ENCODE measurements at regions of chr17 and their contacts with region 1.

Region 1: GRCh38 chr17:8156246-8156992 is 4.2 kb upstream of the PER1 start:
- DNase-seq: peak; percentile 99 to 100 (median 100)
- ATAC-seq: peak; percentile 70
- H3K4me3 ChIP-seq: peak overlapping the region; percentile 86
- H3K4me3 Mint-ChIP-seq: no peak overlapping the region
- H3K27ac ChIP-seq: peak overlapping the region; percentile 99 to 100
- H3K27ac Mint-ChIP-seq: no peak overlapping the region
- H3K4me1 ChIP-seq: peaks cover 88% of the 10 kb centered on the region
- H3K4me1 Mint-ChIP-seq: peaks cover 73% of the 10 kb centered on the region
- H3K27me3 ChIP-seq: no peaks in the 10 kb centered on the region
- H3K27me3 Mint-ChIP-seq: peaks cover 3% of the 10 kb centered on the region
- CTCF ChIP-seq: no peak

Region 2: GRCh38 chr17:8103549-8103948 is 52.9 kb before region 1 on chr17:
- CTCF ChIA-PET with region 1: no interaction called
- POLR2A ChIA-PET with region 1: no interaction called
- intact Hi-C with region 1: no loop called
- DNase-seq: no peak
- ATAC-seq: no peak
- H3K4me3 ChIP-seq: no peak overlapping the region
- H3K4me3 Mint-ChIP-seq: no peak overlapping the region
- H3K27ac ChIP-seq: no peak overlapping the region
- H3K27ac Mint-ChIP-seq: no peak overlapping the region
- H3K4me1 ChIP-seq: no peaks in the 10 kb centered on the region
- H3K4me1 Mint-ChIP-seq: no peaks in the 10 kb centered on the region
- H3K27me3 ChIP-seq: no peaks in the 10 kb centered on the region
- H3K27me3 Mint-ChIP-seq: no peaks in the 10 kb centered on the region
- CTCF ChIP-seq: no peak

Region 3: DNA sequence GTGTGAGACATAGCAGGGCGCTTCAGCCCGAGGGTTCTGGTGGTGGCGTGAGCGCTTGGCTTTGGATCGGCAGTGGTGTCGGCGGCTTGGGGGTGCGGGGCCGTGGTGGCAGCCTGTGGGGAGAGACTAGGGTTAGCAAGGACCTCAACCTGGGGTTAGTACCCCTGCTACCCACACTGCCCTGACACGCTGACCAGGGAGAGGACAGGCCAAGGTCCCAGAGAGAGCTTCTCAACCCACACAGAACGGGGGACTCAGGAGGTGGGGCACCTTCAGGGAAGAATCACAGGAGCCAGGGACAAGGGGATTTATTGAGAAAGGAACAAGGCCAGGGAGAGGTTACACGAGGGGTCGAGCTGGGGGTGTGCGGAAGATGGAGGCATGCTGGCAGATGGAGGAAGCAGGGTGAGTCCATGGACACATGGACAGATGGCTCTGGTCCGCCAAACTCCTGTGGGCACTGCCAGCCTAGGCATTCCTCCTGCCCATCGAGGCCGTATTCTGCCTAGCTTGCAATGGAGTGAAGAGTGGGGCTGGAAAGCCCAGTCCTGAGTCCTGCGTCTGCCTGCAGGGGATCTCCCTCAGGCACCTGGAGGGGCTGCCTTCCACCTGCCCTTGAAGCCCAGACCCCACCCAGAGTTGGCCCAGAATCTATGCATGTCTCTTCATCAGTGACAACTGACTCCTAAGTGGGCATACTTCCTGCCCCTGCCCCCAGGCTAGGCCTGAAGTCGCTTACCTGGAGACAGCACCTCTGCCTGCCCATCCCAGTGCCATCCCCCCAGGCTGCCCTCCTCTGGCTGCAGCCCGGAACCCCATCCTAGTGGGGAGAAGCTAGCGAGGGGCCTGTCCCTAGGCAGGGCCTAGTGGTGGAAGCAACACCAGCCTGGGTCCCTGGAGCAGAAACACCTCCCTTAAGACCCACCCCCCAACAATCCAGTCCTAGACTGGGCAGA is 12.4 kb before region 1 on chr17:
- CTCF ChIA-PET with region 1: interaction called, 32 read pairs
- POLR2A ChIA-PET with region 1: interaction called, 105 read pairs
- intact Hi-C with region 1: no loop called
- DNase-seq: peak in 3 of 14 experiments; percentile 21 to 48 (median 25)
- ATAC-seq: peak; percentile 4
- H3K4me3 ChIP-seq: no peak overlapping the region
- H3K4me3 Mint-ChIP-seq: peak overlapping the region; percentile 56
- H3K27ac ChIP-seq: no peak overlapping the region
- H3K27ac Mint-ChIP-seq: no peak overlapping the region
- H3K4me1 ChIP-seq: peaks cover 29% of the 10 kb centered on the region
- H3K4me1 Mint-ChIP-seq: peaks cover 5% of the 10 kb centered on the region
- H3K27me3 ChIP-seq: no peaks in the 10 kb centered on the region
- H3K27me3 Mint-ChIP-seq: peaks cover 3% of the 10 kb centered on the region
- CTCF ChIP-seq: no peak

Region 4: DNA sequence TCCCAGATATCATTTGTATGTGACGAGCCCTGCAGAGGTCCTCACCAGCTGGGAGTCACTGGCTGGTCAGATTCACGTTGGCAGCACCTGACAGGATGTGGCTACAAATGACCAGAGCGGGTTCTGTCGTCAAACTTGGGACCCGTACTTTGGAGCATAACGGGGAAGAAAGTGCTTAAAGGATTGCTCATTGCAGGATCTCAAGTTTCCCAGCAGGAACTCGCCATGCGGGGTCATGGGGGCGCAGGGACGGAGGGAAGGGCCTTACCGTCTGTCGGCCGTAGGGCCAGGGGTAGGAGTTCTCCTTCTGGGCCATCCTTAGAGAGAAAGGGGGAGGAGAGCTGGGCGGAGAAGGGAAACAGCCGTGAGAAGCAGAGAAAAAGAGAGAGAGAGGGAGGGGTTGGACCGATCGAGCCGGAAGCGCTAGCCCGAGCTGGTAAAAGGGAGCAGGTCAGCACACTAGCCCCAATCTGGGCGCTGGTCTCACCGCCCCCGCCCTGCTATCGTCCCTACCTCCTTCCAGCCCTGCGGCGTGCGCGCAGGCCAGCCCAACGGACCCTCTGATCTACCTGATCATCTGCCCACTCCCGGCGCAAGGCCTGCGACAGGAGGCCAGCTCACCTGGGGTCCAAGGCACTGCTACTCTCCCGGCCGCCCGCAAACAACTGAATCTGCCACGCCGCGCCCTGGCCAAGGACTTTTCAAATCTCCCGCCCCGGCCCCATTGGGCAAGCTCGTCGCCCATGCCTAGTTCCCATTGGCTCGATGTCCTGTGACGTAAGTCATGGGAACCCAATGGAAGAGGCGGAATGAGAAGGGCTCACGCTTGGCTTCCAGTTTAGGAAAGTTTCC is 53.7 kb after region 1 on chr17 and contains the start of gene AURKB:
- CTCF ChIA-PET with region 1: interaction called, 5 read pairs
- POLR2A ChIA-PET with region 1: interaction called, 10 read pairs
- intact Hi-C with region 1: no loop called
- DNase-seq: peak; percentile 84 to 97 (median 90)
- ATAC-seq: peak; percentile 100
- H3K4me3 ChIP-seq: peak within 1 kb of the TSS; percentile 76
- H3K4me3 Mint-ChIP-seq: peak within 1 kb of the TSS; percentile 90
- H3K27ac ChIP-seq: peak within 1 kb of the TSS; percentile 40 to 50
- H3K27ac Mint-ChIP-seq: peak within 1 kb of the TSS; percentile 27
- H3K4me1 ChIP-seq: peaks cover 16% of the 10 kb centered on the region
- H3K4me1 Mint-ChIP-seq: peaks cover 19% of the 10 kb centered on the region
- H3K27me3 ChIP-seq: no peaks in the 10 kb centered on the region
- H3K27me3 Mint-ChIP-seq: no peaks in the 10 kb centered on the region
- CTCF ChIP-seq: no peak
- total RNA-seq, gene AURKB: 0.56 to 1.4 TPM